CD14-positive monocyte (primary cell): ENCODE measurements at regions of chr1 and their contacts with region 1.

Region 1: DNA sequence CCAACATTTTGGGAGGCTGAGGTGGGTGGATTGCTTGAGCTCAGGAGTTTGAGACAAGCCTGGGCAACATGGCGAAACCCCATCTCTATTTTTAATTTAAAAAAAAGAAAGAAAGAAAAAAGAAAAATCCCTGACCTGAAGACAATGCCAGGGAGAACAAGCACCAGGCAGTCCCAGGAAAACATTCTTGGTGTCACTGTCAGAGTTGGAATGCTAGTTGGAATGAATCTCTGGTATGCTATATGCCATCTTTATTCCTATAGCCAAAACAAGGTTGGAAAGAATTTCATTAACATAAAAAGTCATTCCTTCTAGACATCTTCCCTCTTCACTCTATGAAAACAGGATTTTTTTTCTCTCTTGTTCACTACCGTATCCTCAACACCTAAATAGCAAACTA is 2.8 kb downstream of the DNAJC8 start:
- DNase-seq: no peak
- H3K4me3 ChIP-seq: no peak overlapping the region
- H3K4me3 Mint-ChIP-seq: no peak overlapping the region
- H3K27ac ChIP-seq: no peak overlapping the region
- H3K27ac Mint-ChIP-seq: no peak overlapping the region
- H3K4me1 ChIP-seq: peaks cover 15 to 20% of the 10 kb centered on the region in 2 donors
- H3K4me1 Mint-ChIP-seq: peaks cover 13% of the 10 kb centered on the region
- H3K27me3 ChIP-seq: no peaks in the 10 kb centered on the region
- H3K27me3 Mint-ChIP-seq: peaks cover 0 to 2% (median 0%) of the 10 kb centered on the region in 3 donors
- CTCF ChIP-seq: no peak

Region 2: GRCh38 chr1:27719286-27720251 is 510.4 kb before region 1 on chr1:
- intact Hi-C with region 1: no loop called
- DNase-seq: no peak
- H3K4me3 ChIP-seq: no peak overlapping the region
- H3K4me3 Mint-ChIP-seq: no peak overlapping the region
- H3K27ac ChIP-seq: no peak overlapping the region
- H3K27ac Mint-ChIP-seq: no peak overlapping the region
- H3K4me1 ChIP-seq: no peaks in the 10 kb centered on the region
- H3K4me1 Mint-ChIP-seq: peaks cover 2% of the 10 kb centered on the region
- H3K27me3 ChIP-seq: peaks cover 0 to 2% of the 10 kb centered on the region in 2 donors
- H3K27me3 Mint-ChIP-seq: peaks cover 9 to 17% (median 10%) of the 10 kb centered on the region in 3 donors
- CTCF ChIP-seq: no peak

Region 3: GRCh38 chr1:27849951-27850350 is 380.0 kb before region 1 on chr1:
- intact Hi-C with region 1: loop called in 1 of 2 experiments (anchors 10 kb)
- DNase-seq: no peak
- H3K4me3 ChIP-seq: no peak overlapping the region
- H3K4me3 Mint-ChIP-seq: no peak overlapping the region
- H3K27ac ChIP-seq: no peak overlapping the region
- H3K27ac Mint-ChIP-seq: peak overlapping the region in 3 of 7 donors; percentile 57 to 75 (median 68)
- H3K4me1 ChIP-seq: no peaks in the 10 kb centered on the region
- H3K4me1 Mint-ChIP-seq: no peaks in the 10 kb centered on the region
- H3K27me3 ChIP-seq: no peaks in the 10 kb centered on the region
- H3K27me3 Mint-ChIP-seq: peaks cover 0 to 2% (median 0%) of the 10 kb centered on the region in 3 donors
- CTCF ChIP-seq: no peak

Region 4: DNA sequence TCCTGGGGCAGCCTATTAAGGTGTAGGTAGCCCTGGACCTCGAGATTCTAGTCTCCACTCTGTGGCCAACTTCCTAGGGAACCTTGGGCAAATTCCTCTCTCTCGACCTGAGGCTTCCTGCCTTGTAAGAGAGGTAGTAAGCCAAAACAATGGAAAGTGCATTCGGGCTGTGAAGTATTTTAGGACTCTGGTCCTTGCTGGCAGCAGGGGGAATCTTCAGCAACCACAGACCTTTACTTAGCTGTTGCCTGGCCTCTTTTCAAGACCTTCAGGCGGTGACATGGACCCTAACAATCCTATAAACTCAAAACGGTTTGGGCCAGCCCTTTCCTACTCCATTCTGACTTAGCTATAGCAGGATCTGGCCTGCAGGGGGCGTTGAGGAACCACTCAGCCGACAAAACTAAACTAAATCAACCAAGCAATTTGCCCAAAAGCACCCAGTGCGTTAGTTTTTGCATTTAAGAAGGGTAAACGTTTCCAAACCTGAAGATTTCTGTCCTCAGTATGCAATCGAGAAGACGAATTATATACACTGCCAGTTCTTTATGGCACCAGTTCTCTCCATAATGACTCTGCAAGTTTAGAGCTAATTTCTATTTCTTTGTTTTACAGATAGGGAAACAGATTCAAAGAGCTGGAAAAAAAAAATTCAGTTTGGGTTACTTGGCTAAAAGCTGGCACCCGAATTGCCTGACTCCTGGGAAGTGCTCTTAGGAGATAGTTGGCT is 18.5 kb after region 1 on chr1:
- intact Hi-C with region 1: no loop called
- DNase-seq: peak; percentile 69 to 77 (median 76)
- H3K4me3 ChIP-seq: peak overlapping the region in 2 of 3 experiments; percentile 14 to 96
- H3K4me3 Mint-ChIP-seq: peak overlapping the region; percentile 61 to 82
- H3K27ac ChIP-seq: peak overlapping the region; percentile 75 to 89
- H3K27ac Mint-ChIP-seq: peak overlapping the region; percentile 94 to 99 (median 96)
- H3K4me1 ChIP-seq: peaks cover 66 to 69% of the 10 kb centered on the region in 2 donors
- H3K4me1 Mint-ChIP-seq: peaks cover 63% of the 10 kb centered on the region
- H3K27me3 ChIP-seq: no peaks in the 10 kb centered on the region
- H3K27me3 Mint-ChIP-seq: no peaks in the 10 kb centered on the region
- CTCF ChIP-seq: peak; percentile 97

Region 5: DNA sequence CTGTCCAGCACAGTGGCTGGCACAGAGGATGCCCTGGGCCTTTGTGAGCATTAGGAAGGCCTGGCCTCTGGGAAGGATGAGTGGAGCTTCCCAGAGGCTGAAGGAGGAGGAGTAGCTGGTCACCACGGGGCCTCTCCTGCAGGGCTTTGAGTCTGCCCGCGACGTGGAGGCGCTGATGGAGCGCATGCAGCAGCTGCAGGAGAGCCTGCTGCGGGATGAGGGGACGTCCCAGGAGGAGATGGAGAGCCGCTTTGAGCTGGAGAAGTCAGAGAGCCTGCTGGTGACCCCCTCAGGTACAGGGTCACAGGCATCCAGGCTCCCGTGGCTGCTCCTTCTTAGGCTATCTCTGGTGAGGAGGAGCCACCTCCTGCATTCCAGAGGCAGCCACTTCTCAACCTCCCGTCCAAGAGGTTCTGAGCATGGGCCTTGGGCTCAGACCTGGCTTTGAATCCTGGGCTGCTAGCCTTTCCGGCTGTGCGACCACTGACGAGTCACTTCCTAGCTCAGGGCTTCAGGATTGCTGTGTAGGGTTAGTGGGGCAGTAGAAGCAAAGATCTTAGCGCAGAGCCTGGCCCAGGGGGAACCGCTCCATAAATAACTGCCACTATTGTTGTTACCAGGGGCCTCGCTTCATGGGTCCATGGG is 43.3 kb after region 1 on chr1:
- intact Hi-C with region 1: no loop called
- DNase-seq: no peak
- H3K4me3 ChIP-seq: no peak overlapping the region
- H3K4me3 Mint-ChIP-seq: no peak overlapping the region
- H3K27ac ChIP-seq: no peak overlapping the region
- H3K27ac Mint-ChIP-seq: no peak overlapping the region
- H3K4me1 ChIP-seq: no peaks in the 10 kb centered on the region
- H3K4me1 Mint-ChIP-seq: peaks cover 2% of the 10 kb centered on the region
- H3K27me3 ChIP-seq: no peaks in the 10 kb centered on the region
- H3K27me3 Mint-ChIP-seq: peaks cover 0 to 4% (median 1%) of the 10 kb centered on the region in 3 donors
- CTCF ChIP-seq: no peak